Activated CD4-positive, alpha-beta memory T cell treated with anti-CD3 and anti-CD28 coated beads, Interleukin-2, amount 10 ng/mL, durations not matched to agents 7 days and 5 days (primary cell): ENCODE measurements at regions of chr1 and their contacts with region 1.

Region 1: GRCh38 chr1:225777583-225778336 is at the start of gene SRP9:
- DNase-seq: peak; percentile 99
- H3K4me3 Mint-ChIP-seq: no peak within 1 kb of the TSS
- H3K27ac Mint-ChIP-seq: no peak within 1 kb of the TSS
- H3K4me1 Mint-ChIP-seq: peaks cover 29% of the 10 kb centered on the region
- H3K27me3 Mint-ChIP-seq: no peaks in the 10 kb centered on the region
- total RNA-seq, gene SRP9: 246 to 253 TPM

Region 2: GRCh38 chr1:225428068-225428880 is 349.5 kb before region 1 on chr1:
- CTCF ChIA-PET with region 1: interaction called, 5 read pairs
- POLR2A ChIA-PET with region 1: interaction called, 36 read pairs
- DNase-seq: peak; percentile 95
- H3K4me3 Mint-ChIP-seq: peak overlapping the region; percentile 89
- H3K27ac Mint-ChIP-seq: peak overlapping the region; percentile 89
- H3K4me1 Mint-ChIP-seq: peaks cover 54% of the 10 kb centered on the region
- H3K27me3 Mint-ChIP-seq: peaks cover 2% of the 10 kb centered on the region

Region 3: DNA sequence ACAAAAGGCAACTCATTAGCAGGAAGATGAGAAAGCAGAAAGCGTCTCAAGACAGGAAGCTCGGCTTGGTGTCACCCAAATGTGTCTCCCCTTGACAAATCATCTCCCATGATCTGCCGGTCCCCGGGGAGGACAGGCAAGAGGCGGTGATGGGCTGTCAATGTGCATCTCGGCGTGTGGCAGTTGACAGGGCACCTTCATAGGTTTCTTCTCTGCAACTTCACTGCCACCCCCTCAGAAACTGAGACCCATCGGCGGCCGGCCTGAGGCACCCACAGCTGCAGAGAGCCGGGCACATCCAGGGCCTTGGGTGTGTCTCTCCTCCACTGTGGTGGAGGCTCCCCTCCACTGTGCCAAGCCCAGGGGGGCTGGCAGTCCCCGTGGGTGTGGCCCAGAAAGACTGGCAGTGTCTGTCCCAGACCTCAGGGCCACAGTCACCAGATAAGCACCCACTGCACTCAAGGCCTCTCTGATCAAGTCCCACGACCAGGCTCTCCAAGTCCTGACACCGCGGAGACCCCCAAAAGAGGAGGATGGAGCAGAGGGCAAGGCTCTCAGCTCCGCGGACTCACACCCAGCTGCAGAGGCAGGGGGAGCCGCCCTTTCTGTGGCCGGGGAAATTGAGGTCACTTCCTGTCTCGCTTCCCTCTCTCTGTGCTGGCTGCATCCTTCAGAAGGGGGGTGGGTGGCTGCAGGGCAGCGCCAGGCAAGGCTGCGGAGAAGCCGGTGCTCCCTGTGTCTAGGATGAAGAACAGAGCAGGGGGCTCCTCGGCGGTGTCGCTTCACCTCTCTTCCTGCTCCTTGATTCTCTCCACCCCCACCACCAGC is 310.4 kb before region 1 on chr1:
- CTCF ChIA-PET with region 1: interaction called, 14 read pairs
- POLR2A ChIA-PET with region 1: interaction called, 38 read pairs
- DNase-seq: peak; percentile 91
- H3K4me3 Mint-ChIP-seq: peak overlapping the region; percentile 91
- H3K27ac Mint-ChIP-seq: peak overlapping the region; percentile 99
- H3K4me1 Mint-ChIP-seq: peaks cover 64% of the 10 kb centered on the region
- H3K27me3 Mint-ChIP-seq: no peaks in the 10 kb centered on the region

Region 4: DNA sequence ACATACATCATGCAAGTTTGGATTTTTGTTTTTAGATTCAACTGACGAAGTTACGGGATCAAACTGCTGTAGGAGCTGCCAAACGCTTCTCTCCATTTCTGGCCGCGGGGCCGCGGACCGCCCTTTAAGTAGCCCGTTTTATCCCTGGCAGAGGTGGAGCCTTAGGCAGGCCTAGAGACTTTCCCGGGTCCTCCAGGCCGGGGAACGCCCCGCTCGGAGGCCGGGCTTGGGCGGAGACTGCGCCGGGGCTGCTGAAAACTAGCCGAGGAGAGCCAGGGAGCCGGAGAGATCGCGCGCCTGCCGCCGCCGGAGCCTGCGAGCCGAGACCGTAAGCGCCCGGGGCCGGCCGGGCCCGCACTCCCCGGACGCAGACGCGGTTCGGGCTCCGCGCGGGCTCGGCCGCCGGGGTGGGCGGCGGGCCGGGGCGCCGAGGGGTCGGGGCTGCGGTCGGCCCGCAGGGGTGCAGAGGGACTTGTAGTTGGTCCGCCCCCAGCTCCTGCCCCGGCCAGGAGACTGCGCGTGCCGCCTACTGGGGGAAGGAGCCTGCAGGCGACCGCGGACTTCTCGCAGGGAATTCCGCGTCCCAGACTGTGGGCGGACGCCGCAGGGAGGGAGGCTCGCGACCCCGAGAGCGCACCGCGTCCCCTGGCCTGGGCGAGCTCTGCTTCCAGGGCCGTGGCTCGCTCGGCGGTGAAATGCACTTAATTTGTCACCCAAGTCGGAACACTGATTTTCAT is 32.2 kb after region 1 on chr1 and contains the start of gene EPHX1:
- CTCF ChIA-PET with region 1: interaction called, 4 read pairs
- POLR2A ChIA-PET with region 1: interaction called, 13 read pairs
- DNase-seq: peak; percentile 74
- H3K4me3 Mint-ChIP-seq: peak within 1 kb of the TSS; percentile 75
- H3K27ac Mint-ChIP-seq: no peak within 1 kb of the TSS
- H3K4me1 Mint-ChIP-seq: peaks cover 15% of the 10 kb centered on the region
- H3K27me3 Mint-ChIP-seq: peaks cover 10% of the 10 kb centered on the region
- total RNA-seq, gene EPHX1: 0.93 to 1.0 TPM

Region 5: GRCh38 chr1:225896937-225897549 is 119.3 kb after region 1 on chr1:
- CTCF ChIA-PET with region 1: interaction called, 4 read pairs
- POLR2A ChIA-PET with region 1: interaction called, 35 read pairs
- DNase-seq: peak; percentile 83
- H3K4me3 Mint-ChIP-seq: peak overlapping the region; percentile 12
- H3K27ac Mint-ChIP-seq: peak overlapping the region; percentile 64
- H3K4me1 Mint-ChIP-seq: peaks cover 36% of the 10 kb centered on the region
- H3K27me3 Mint-ChIP-seq: peaks cover 21% of the 10 kb centered on the region

Region 6: GRCh38 chr1:225923692-225924555 is 146.2 kb after region 1 on chr1 and contains the start of gene PYCR2:
- CTCF ChIA-PET with region 1: interaction called, 7 read pairs
- POLR2A ChIA-PET with region 1: interaction called, 56 read pairs
- DNase-seq: peak; percentile 97
- H3K4me3 Mint-ChIP-seq: peak within 1 kb of the TSS; percentile 96
- H3K27ac Mint-ChIP-seq: peak within 1 kb of the TSS; percentile 89
- H3K4me1 Mint-ChIP-seq: peaks cover 54% of the 10 kb centered on the region
- H3K27me3 Mint-ChIP-seq: no peaks in the 10 kb centered on the region
- total RNA-seq, gene PYCR2: 101 to 105 TPM

Region 7: DNA sequence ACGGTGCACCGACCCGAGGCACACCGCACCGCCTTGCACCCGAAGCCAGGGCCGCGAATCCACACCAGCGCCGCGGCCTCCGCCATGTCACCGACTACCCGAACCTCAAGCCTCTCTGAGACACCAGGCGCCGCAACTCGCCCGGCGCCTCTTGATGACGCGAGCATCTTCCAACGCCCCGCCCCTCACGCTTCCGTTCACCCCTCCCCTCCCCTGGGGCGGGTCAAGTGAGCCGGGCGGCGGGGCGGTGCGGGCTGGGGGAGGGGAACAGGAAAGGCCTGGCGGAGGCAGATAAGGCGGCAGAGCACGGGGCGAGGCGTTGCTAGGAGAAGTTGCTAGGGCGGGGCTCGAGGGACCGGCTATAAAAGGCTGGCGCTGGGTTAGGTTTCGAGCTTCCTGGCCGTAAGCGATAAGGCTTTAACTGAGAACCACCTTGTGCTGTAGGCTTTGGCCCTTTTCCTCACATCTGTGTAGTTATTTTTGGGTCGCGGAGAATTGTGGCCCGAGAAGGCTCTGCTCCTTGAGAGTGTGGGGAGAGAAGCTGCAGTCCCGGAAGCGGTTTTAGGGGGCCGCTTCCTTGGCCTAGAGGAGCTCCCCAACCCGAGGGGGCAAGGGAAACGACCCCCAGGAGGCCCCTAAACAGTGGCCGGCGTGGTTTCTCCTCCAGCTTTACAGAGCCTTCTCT is 221.6 kb after region 1 on chr1 and contains the start of gene SDE2:
- CTCF ChIA-PET with region 1: interaction called, 3 read pairs
- POLR2A ChIA-PET with region 1: interaction called, 39 read pairs
- DNase-seq: peak; percentile 100
- H3K4me3 Mint-ChIP-seq: peak within 1 kb of the TSS; percentile 100
- H3K27ac Mint-ChIP-seq: peak within 1 kb of the TSS; percentile 100
- H3K4me1 Mint-ChIP-seq: peaks cover 71% of the 10 kb centered on the region
- H3K27me3 Mint-ChIP-seq: no peaks in the 10 kb centered on the region
- total RNA-seq, gene SDE2: 19.8 to 20.1 TPM